Thyroid gland (tissue), 4 donors: ENCODE measurements at regions of chr5 and their contacts with region 1.

Region 1: GRCh38 chr5:5141625-5142532 is 1.7 kb downstream of the ADAMTS16 start:
- DNase-seq: peak; percentile 47 to 63
- H3K4me3 ChIP-seq: no peak overlapping the region
- H3K27ac ChIP-seq: no peak overlapping the region
- H3K4me1 ChIP-seq: peaks cover 8 to 19% of the 10 kb centered on the region in 2 donors
- H3K27me3 ChIP-seq: peaks cover 10% of the 10 kb centered on the region
- CTCF ChIP-seq: peak; percentile 26 to 70 (median 64)
- POLR2A ChIP-seq: no peak

Region 2: DNA sequence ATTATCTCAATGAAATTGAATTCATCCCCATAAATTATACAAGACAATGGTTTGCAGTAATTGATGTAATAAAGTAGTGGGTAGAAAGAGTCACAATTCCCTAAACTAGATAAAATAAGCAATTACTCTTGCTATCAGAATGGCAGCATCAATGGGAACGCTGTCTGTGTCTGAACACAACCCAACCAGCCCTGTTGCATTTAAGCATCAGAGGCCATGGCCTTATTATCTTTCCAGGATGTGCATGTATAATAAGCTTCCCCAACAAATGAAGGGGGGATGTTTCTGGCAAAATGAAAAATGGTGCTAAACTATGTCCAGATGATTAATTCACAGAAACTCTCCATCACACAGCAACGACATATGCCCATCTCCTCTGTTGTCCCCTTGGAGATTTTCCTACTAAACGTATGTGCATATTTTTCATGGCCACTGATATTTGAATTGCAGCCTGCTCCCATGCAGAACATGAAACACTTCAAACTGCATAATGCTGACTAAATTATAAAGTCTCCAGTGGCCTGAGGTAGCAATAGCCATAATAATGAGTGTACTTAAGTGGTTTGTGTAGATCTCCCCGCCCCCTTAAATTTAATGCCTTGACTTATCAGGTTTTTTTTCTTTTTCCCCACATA is 308.7 kb before region 1 on chr5:
- intact Hi-C with region 1: no loop called
- DNase-seq: no peak
- H3K4me3 ChIP-seq: no peak overlapping the region
- H3K27ac ChIP-seq: no peak overlapping the region
- H3K4me1 ChIP-seq: no peaks in the 10 kb centered on the region
- H3K27me3 ChIP-seq: no peaks in the 10 kb centered on the region
- CTCF ChIP-seq: no peak
- POLR2A ChIP-seq: no peak

Region 3: DNA sequence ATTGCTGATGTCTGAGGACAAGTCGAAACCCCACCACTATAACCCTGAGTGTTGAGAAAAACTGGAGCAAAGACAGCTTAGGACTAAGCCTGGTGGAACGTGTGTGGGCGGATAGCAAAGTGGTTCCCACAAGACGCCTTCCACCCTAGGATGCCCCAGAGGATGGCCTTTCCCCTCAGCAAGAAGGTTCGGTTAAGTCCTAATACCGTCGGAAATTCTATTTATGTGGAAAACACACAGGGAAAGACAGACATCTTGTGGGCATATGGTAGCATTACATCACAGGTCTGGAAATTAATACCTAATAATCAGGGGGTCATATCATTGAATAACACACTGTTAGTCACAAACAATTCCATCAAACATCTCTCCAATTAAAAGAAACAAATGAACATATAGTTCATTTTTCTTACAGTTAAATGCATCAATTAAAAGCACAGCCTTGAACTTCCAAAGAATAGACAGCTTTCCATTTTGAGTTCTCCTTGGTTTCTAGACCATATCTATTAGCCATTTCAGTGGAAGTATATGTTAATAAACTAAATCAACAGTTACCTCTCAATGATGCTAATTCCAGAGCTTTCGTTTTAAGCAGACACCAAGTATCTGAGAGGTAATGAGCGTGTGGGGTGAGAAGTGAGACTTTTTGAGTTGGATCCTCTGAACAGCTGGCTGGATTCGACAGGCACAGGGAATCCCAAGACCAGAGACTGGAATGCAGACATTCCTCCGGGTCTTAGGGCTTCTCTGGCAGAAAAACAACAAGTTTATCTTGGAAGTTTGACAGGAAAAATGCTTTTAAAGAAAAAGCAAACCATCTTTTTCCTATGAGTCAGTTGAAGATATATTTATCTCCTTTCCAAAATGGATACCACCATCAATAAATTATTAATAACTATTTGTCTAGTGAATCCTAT is 277.7 kb after region 1 on chr5:
- intact Hi-C with region 1: loop called (anchors 5 kb)
- DNase-seq: peak in 1 of 2 donors; percentile 15
- H3K4me3 ChIP-seq: no peak overlapping the region
- H3K27ac ChIP-seq: no peak overlapping the region
- H3K4me1 ChIP-seq: peaks cover 21 to 23% of the 10 kb centered on the region in 2 donors
- H3K27me3 ChIP-seq: no peaks in the 10 kb centered on the region
- CTCF ChIP-seq: peak in 5 of 6 experiments; percentile 32 to 84 (median 60)
- POLR2A ChIP-seq: no peak